B cell (primary cell): ENCODE measurements at regions of chr3 and their contacts with region 1.

Region 1: DNA sequence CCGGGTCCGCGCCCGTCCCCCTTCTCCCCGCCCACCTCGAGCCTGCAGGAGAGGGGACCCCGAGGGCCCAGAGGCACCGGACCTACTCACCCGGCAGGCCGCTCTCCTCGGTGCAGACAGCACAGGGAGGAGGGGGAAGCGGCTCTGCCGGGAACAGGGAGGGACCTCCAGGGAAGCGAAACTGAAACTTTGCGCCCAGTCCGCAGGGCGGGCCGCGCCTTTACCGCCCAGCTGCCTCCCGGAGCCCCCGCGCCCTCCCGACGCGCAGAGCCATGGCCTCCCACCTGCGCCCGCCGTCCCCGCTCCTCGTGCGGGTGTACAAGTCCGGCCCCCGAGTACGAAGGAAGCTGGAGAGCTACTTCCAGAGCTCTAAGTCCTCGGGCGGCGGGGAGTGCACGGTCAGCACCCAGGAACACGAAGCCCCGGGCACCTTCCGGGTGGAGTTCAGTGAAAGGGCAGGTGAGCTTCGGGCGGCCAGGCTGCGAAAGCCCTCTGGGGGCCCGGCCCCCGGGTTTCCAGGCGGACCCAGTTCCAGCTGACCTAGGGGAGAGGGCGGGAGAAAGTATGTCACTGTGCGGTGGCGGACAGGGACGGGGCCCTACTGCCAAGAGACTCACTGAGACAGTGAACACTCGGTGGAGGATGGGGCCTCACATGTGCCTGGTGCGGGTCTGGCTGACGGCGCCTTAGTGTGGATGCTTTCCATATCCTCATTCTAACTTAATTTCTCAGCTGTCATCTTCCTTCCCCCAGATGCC is at the starts of genes DTX3L and PARP9:
- DNase-seq: peak; percentile 84
- ATAC-seq: peak; percentile 84
- H3K4me3 ChIP-seq: peak within 1 kb of the TSS; percentile 63 to 95 (median 89)
- H3K4me3 Mint-ChIP-seq: peak within 1 kb of the TSS; percentile 92
- H3K27ac ChIP-seq: peak within 1 kb of the TSS; percentile 91 to 92
- H3K27ac Mint-ChIP-seq: peak within 1 kb of the TSS; percentile 95
- H3K4me1 ChIP-seq: peaks cover 59 to 69% of the 10 kb centered on the region in 2 donors
- H3K4me1 Mint-ChIP-seq: peaks cover 77% of the 10 kb centered on the region
- H3K27me3 ChIP-seq: no peaks in the 10 kb centered on the region
- H3K27me3 Mint-ChIP-seq: no peaks in the 10 kb centered on the region
- CTCF ChIP-seq: no peak
- total RNA-seq, gene DTX3L: 41.1 and 44.0 TPM in 2 replicates
- total RNA-seq, gene PARP9: 29.8 and 31.2 TPM in 2 replicates

Region 2: DNA sequence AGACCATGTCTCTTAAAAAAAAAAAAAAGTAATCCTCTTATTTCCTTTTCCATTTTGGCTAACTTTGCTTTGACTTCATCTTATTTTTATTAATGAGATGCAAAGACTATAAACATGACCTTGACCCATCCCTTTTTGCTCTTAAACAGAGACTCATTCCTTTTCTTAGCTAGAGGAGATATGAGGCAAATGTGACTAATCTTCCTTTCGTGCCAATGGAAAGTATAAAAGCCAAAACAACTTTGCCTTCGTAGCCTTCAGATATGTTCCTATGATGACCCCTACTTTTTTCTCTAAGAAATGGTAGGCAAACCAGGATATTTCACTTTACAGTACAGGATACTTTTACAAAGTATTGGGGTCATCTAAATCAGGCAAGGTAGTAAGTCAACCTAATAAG is 777.8 kb before region 1 on chr3:
- CTCF ChIA-PET with region 1: no interaction called
- POLR2A ChIA-PET with region 1: no interaction called
- intact Hi-C with region 1: no loop called
- DNase-seq: no peak
- ATAC-seq: no peak
- H3K4me3 ChIP-seq: no peak overlapping the region
- H3K4me3 Mint-ChIP-seq: no peak overlapping the region
- H3K27ac ChIP-seq: peak overlapping the region in 1 of 2 donors; percentile 25
- H3K27ac Mint-ChIP-seq: no peak overlapping the region
- H3K4me1 ChIP-seq: no peaks in the 10 kb centered on the region
- H3K4me1 Mint-ChIP-seq: peaks cover 16% of the 10 kb centered on the region
- H3K27me3 ChIP-seq: no peaks in the 10 kb centered on the region
- H3K27me3 Mint-ChIP-seq: no peaks in the 10 kb centered on the region
- CTCF ChIP-seq: no peak

Region 3: GRCh38 chr3:122589297-122589696 is 25.0 kb after region 1 on chr3:
- CTCF ChIA-PET with region 1: interaction called, 4 read pairs
- POLR2A ChIA-PET with region 1: no interaction called
- intact Hi-C with region 1: loop called (anchors 2 kb)
- DNase-seq: peak; percentile 42
- ATAC-seq: peak; percentile 40
- H3K4me3 ChIP-seq: no peak overlapping the region
- H3K4me3 Mint-ChIP-seq: peak overlapping the region; percentile 46
- H3K27ac ChIP-seq: peak overlapping the region; percentile 22 to 76
- H3K27ac Mint-ChIP-seq: peak overlapping the region; percentile 85
- H3K4me1 ChIP-seq: peaks cover 36 to 40% of the 10 kb centered on the region in 2 donors
- H3K4me1 Mint-ChIP-seq: peaks cover 68% of the 10 kb centered on the region
- H3K27me3 ChIP-seq: no peaks in the 10 kb centered on the region
- H3K27me3 Mint-ChIP-seq: no peaks in the 10 kb centered on the region
- CTCF ChIP-seq: no peak

Region 4: DNA sequence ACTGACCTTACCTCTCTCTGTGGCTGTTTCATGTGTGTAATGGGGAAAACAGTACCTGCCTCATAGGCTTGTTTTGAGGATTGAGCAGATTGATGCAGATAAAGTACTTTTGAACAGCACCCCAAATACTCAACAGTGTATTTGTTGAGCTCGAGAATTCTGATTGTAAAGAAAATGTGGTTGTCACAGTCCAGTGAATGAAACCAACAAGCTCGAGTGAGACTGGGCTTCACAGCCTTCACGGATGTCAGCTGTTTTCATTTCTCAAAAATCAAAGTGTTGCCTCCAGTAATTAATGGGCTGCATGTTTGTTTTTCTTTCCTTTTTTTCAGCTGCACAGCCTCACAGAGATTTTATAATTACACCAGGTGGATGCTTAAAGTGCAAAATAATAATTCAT is 56.8 kb after region 1 on chr3:
- CTCF ChIA-PET with region 1: interaction called, 9 read pairs
- POLR2A ChIA-PET with region 1: interaction called, 3 read pairs
- intact Hi-C with region 1: loop called (anchors 1 kb)
- DNase-seq: peak; percentile 56
- ATAC-seq: peak; percentile 39
- H3K4me3 ChIP-seq: no peak overlapping the region
- H3K4me3 Mint-ChIP-seq: peak overlapping the region; percentile 69
- H3K27ac ChIP-seq: peak overlapping the region; percentile 52 to 77
- H3K27ac Mint-ChIP-seq: peak overlapping the region; percentile 92
- H3K4me1 ChIP-seq: peaks cover 36 to 63% of the 10 kb centered on the region in 2 donors
- H3K4me1 Mint-ChIP-seq: peaks cover 67% of the 10 kb centered on the region
- H3K27me3 ChIP-seq: no peaks in the 10 kb centered on the region
- H3K27me3 Mint-ChIP-seq: no peaks in the 10 kb centered on the region
- CTCF ChIP-seq: no peak

Region 5: GRCh38 chr3:122697952-122698620 is 133.8 kb after region 1 on chr3:
- CTCF ChIA-PET with region 1: interaction called, 20 read pairs
- POLR2A ChIA-PET with region 1: interaction called, 3 read pairs
- intact Hi-C with region 1: loop called (anchors 5 kb)
- DNase-seq: peak; percentile 89
- ATAC-seq: peak; percentile 96
- H3K4me3 ChIP-seq: peak overlapping the region in 1 of 5 experiments; percentile 48
- H3K4me3 Mint-ChIP-seq: peak overlapping the region; percentile 59
- H3K27ac ChIP-seq: peak overlapping the region; percentile 84 to 95
- H3K27ac Mint-ChIP-seq: peak overlapping the region; percentile 88
- H3K4me1 ChIP-seq: peaks cover 78 to 83% of the 10 kb centered on the region in 2 donors
- H3K4me1 Mint-ChIP-seq: peaks cover 85% of the 10 kb centered on the region
- H3K27me3 ChIP-seq: no peaks in the 10 kb centered on the region
- H3K27me3 Mint-ChIP-seq: no peaks in the 10 kb centered on the region
- CTCF ChIP-seq: no peak

Region 6: GRCh38 chr3:122754929-122755328 is 190.6 kb after region 1 on chr3:
- CTCF ChIA-PET with region 1: interaction called, 14 read pairs
- POLR2A ChIA-PET with region 1: no interaction called
- intact Hi-C with region 1: no loop called
- DNase-seq: peak; percentile 69
- ATAC-seq: peak; percentile 76
- H3K4me3 ChIP-seq: no peak overlapping the region
- H3K4me3 Mint-ChIP-seq: no peak overlapping the region
- H3K27ac ChIP-seq: no peak overlapping the region
- H3K27ac Mint-ChIP-seq: no peak overlapping the region
- H3K4me1 ChIP-seq: no peaks in the 10 kb centered on the region
- H3K4me1 Mint-ChIP-seq: no peaks in the 10 kb centered on the region
- H3K27me3 ChIP-seq: no peaks in the 10 kb centered on the region
- H3K27me3 Mint-ChIP-seq: no peaks in the 10 kb centered on the region
- CTCF ChIP-seq: peak; percentile 76